ENCODE measurements at regions of chr21 and their contacts with region 1.

Region 1: GRCh38 chr21:29477941-29478340 is 179.2 kb downstream of the BACH1 start:
- DNase-seq: no peak
- ATAC-seq: no peak
- H3K4me3 Mint-ChIP-seq: no peak overlapping the region
- H3K27ac Mint-ChIP-seq: no peak overlapping the region
- H3K4me1 Mint-ChIP-seq: peaks cover 9% of the 10 kb centered on the region
- H3K27me3 Mint-ChIP-seq: no peaks in the 10 kb centered on the region
- CTCF ChIP-seq: no peak

Region 2: GRCh38 chr21:29462479-29462878 is 15.5 kb before region 1 on chr21:
- CTCF ChIA-PET with region 1: no interaction called
- POLR2A ChIA-PET with region 1: no interaction called
- intact Hi-C with region 1: no loop called
- DNase-seq: no peak
- ATAC-seq: no peak
- H3K4me3 Mint-ChIP-seq: no peak overlapping the region
- H3K27ac Mint-ChIP-seq: no peak overlapping the region
- H3K4me1 Mint-ChIP-seq: no peaks in the 10 kb centered on the region
- H3K27me3 Mint-ChIP-seq: no peaks in the 10 kb centered on the region
- CTCF ChIP-seq: no peak

Region 3: DNA sequence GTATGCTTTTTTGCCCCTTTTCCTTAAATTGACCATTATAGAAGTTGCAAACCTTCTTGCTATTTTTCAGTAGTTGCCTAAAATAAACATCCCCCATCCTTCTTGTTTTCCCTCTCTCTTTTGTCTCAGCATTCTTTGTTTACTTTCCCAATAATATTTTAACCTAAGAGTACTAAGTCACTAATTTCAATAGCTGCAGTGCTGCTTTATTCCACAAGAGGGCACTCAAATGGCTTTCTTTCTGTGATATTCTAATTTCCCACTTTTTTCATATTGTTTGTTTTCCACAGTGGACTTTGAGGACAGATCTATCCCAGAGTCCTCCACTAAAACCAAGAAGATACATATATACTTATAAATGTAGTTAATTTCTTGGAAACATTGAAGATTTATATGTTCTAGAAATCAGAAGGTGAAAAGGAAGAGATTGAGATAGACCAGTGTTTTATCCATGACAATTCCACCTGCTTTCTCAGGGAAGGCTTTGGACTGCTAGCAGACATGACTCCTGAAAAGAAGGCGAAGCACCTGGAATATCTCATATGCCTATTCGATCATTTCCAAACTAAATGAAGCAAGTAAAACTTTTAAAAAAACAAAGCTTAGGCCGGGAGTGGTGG is 566.6 kb after region 1 on chr21:
- CTCF ChIA-PET with region 1: interaction called, 4 read pairs
- POLR2A ChIA-PET with region 1: no interaction called
- intact Hi-C with region 1: loop called (anchors 5 kb)
- DNase-seq: no peak
- ATAC-seq: no peak
- H3K4me3 Mint-ChIP-seq: no peak overlapping the region
- H3K27ac Mint-ChIP-seq: no peak overlapping the region
- H3K4me1 Mint-ChIP-seq: no peaks in the 10 kb centered on the region
- H3K27me3 Mint-ChIP-seq: no peaks in the 10 kb centered on the region
- CTCF ChIP-seq: peak; percentile 40